Activated CD4-positive, alpha-beta T cell treated with anti-CD3 and anti-CD28 coated beads for 36 hours (primary cell): ENCODE measurements at regions of chr20 and their contacts with region 1.

Region 1: GRCh38 chr20:57622579-57623377 is 2.6 kb upstream of the ZBP1 start:
- DNase-seq: peak; percentile 86
- ATAC-seq: peak; percentile 10
- H3K4me3 Mint-ChIP-seq: peak overlapping the region; percentile 36
- H3K27ac Mint-ChIP-seq: peak overlapping the region; percentile 19
- H3K4me1 Mint-ChIP-seq: peaks cover 64% of the 10 kb centered on the region
- H3K27me3 Mint-ChIP-seq: no peaks in the 10 kb centered on the region

Region 2: GRCh38 chr20:57698117-57698866 is 75.5 kb after region 1 on chr20:
- CTCF ChIA-PET with region 1: interaction called, 6 read pairs
- POLR2A ChIA-PET with region 1: no interaction called
- intact Hi-C with region 1: loop called (anchors 1 to 2 kb)
- DNase-seq: peak; percentile 89
- ATAC-seq: peak; percentile 99
- H3K4me3 Mint-ChIP-seq: peak overlapping the region; percentile 33
- H3K27ac Mint-ChIP-seq: peak overlapping the region; percentile 77
- H3K4me1 Mint-ChIP-seq: peaks cover 40% of the 10 kb centered on the region
- H3K27me3 Mint-ChIP-seq: no peaks in the 10 kb centered on the region

Region 3: DNA sequence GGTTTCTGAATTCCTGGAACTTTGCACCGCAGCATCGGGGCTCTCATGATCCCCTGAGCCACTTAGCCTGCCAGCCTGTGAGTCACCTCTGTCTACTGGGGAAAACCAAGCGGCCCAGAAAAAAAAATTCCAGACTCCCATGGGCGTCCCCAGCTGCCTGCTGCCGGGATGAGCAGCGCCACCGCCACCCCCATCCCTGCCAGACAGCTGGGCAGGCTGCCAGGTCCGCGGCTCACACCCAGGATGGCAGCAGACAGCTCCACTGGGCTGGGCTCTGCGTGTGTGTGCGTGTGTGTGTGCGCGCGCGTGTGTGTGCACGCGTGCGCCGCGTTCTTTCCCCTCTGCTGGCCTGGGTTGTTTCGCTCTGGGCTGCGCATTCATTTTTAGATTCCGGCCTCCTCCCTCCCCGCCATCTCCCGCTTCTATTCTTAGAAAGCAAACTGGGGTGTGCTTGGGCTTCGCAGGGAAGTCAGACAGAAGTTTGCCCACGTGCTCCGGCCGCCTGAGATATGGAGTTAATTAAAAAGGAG is 125.9 kb after region 1 on chr20:
- CTCF ChIA-PET with region 1: interaction called, 3 read pairs
- POLR2A ChIA-PET with region 1: no interaction called
- intact Hi-C with region 1: loop called in 1 of 2 experiments (anchors 1 kb)
- DNase-seq: peak; percentile 77
- ATAC-seq: peak; percentile 94
- H3K4me3 Mint-ChIP-seq: peak overlapping the region; percentile 48
- H3K27ac Mint-ChIP-seq: peak overlapping the region; percentile 31
- H3K4me1 Mint-ChIP-seq: peaks cover 15% of the 10 kb centered on the region
- H3K27me3 Mint-ChIP-seq: peaks cover 25% of the 10 kb centered on the region

Region 4: GRCh38 chr20:57964011-57964862 is 341.5 kb after region 1 on chr20:
- CTCF ChIA-PET with region 1: no interaction called
- POLR2A ChIA-PET with region 1: no interaction called
- intact Hi-C with region 1: no loop called
- DNase-seq: no peak
- ATAC-seq: no peak
- H3K4me3 Mint-ChIP-seq: no peak overlapping the region
- H3K27ac Mint-ChIP-seq: no peak overlapping the region
- H3K4me1 Mint-ChIP-seq: no peaks in the 10 kb centered on the region
- H3K27me3 Mint-ChIP-seq: peaks cover 6% of the 10 kb centered on the region

Region 5: GRCh38 chr20:58087193-58087858 is 464.5 kb after region 1 on chr20:
- CTCF ChIA-PET with region 1: interaction called, 12 read pairs
- POLR2A ChIA-PET with region 1: no interaction called
- intact Hi-C with region 1: no loop called
- DNase-seq: peak; percentile 47
- ATAC-seq: no peak
- H3K4me3 Mint-ChIP-seq: no peak overlapping the region
- H3K27ac Mint-ChIP-seq: no peak overlapping the region
- H3K4me1 Mint-ChIP-seq: no peaks in the 10 kb centered on the region
- H3K27me3 Mint-ChIP-seq: peaks cover 10% of the 10 kb centered on the region

Region 6: GRCh38 chr20:58388882-58389323 is 766.1 kb after region 1 on chr20 and contains the start of gene VAPB:
- CTCF ChIA-PET with region 1: no interaction called
- POLR2A ChIA-PET with region 1: no interaction called
- intact Hi-C with region 1: loop called in 1 of 2 experiments (anchors 10 kb)
- DNase-seq: peak; percentile 98
- ATAC-seq: peak; percentile 99
- H3K4me3 Mint-ChIP-seq: peak within 1 kb of the TSS; percentile 100
- H3K27ac Mint-ChIP-seq: peak within 1 kb of the TSS; percentile 97
- H3K4me1 Mint-ChIP-seq: peaks cover 39% of the 10 kb centered on the region
- H3K27me3 Mint-ChIP-seq: peaks cover 2% of the 10 kb centered on the region
- total RNA-seq, gene VAPB: 43.9 to 54.5 TPM